MCF 10A (cell line): ENCODE measurements at regions of chr3 and their contacts with region 1.

Region 1: DNA sequence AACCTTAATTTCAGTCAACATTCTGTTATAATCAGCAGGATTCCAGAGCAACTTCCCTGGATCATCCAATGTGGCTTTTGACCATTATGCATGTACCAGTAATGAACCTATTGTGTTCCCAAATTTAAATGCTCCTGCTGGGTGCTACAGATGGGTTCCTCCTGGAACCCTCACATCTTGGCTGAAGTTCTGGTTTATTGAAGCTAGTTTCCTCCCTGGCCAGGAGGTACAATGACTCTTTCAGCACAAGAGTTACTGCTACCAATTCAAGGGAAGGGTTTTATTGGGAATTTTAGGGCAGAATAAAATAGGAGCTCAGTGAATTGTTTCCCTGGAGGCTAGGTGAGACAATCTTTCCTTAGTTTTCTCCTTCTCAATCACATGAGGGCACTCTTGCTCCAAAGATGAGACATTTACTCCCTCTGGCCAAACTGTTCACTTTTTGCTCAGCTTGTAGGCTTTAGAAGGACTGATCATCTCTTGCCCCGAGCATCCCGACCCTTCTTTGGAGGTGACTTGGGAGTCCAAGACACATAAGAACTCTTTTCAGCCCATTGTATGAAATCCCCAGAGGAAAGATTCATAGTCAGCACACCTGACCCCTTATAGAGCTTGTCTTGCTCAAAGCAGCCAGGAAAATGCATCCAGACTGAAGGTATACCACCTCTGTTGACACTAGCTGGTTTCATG is 8.8 kb upstream of the NPHP3 start:
- DNase-seq: peak; percentile 60
- H3K4me3 Mint-ChIP-seq: no peak overlapping the region
- H3K27ac Mint-ChIP-seq: no peak overlapping the region
- H3K4me1 Mint-ChIP-seq: no peaks in the 10 kb centered on the region
- H3K27me3 Mint-ChIP-seq: peaks cover 69% of the 10 kb centered on the region
- CTCF ChIP-seq: peak; percentile 55

Region 2: GRCh38 chr3:132709761-132710160 is 21.3 kb before region 1 on chr3:
- CTCF ChIA-PET with region 1: no interaction called
- POLR2A ChIA-PET with region 1: no interaction called
- intact Hi-C with region 1: no loop called
- DNase-seq: no peak
- H3K4me3 Mint-ChIP-seq: no peak overlapping the region
- H3K27ac Mint-ChIP-seq: no peak overlapping the region
- H3K4me1 Mint-ChIP-seq: no peaks in the 10 kb centered on the region
- H3K27me3 Mint-ChIP-seq: no peaks in the 10 kb centered on the region
- CTCF ChIP-seq: no peak

Region 3: DNA sequence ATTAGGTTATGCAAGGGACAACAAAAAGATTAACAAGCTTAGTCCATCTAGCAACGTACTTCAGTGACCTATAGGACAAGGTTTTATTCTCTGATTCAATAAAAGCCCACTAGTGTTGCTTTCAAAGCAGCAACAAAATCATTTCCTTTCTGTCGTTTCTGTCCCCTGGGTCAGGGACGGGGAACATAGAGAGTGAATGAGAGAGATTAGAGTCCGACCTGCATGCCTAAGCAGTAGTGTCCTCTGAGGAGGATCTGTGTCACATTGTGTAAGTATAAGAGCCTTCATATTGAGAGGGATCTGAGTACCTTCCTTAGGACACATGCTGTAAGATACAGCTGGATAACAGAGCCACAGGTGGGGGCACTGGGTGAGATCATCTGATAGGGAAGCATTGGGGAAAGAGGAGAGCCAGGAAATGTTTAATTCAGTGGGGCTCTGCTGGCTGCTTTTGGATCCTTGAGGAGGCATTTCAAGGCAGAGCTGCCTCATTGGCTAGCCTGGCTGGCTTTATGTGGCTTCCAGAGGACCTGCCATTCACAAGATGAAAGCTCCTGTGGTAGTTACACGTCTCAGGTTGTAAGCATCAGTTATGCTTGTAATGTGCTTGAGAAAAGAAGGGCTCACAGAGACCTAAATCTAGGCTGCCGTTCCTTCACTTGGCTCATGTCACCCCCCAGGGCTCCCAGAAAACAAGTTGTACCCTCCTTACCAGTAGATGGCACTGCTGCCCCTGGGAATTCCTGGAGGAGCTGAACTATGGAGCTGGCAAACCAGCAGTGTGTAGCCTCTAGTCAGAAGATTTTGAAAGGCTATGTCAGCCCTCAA is 309.9 kb after region 1 on chr3:
- CTCF ChIA-PET with region 1: interaction called, 35 read pairs
- POLR2A ChIA-PET with region 1: interaction called, 3 read pairs
- intact Hi-C with region 1: loop called (anchors 1 kb)
- DNase-seq: peak; percentile 84
- H3K4me3 Mint-ChIP-seq: no peak overlapping the region
- H3K27ac Mint-ChIP-seq: no peak overlapping the region
- H3K4me1 Mint-ChIP-seq: no peaks in the 10 kb centered on the region
- H3K27me3 Mint-ChIP-seq: peaks cover 91% of the 10 kb centered on the region
- CTCF ChIP-seq: peak; percentile 79

Region 4: DNA sequence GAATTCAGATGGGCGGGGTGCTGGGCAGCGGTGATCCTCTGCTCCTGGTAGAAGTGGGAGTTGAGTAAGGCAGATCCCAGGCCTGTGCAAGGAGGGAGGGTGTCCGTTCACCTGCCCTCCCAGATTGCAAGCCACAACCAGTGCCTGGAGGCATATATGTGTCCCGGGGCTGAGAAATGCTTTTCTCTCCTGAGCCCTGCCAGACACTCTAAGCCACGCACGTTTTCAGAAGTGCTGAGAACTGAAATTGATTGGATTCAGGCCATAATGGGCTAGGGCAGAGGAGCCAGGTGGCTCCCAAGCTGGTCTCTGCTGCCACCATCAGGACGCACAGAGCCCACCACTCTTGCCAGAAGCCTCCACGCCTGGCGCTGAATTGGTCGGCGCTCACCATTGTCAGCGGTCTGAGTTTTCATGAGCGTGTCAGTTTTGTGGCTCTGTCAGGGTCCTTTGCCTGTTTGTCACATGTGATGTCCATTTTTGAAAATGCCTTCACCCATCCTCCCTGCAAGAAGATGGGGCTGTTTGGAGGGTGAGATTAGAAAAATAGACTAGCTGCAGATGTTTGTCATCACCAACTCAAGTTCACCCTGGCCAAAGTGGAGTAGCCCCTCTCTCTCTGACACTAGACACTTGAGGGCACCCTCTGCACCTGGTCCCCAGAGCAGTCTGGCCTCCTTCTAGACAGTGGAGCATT is 653.4 kb after region 1 on chr3:
- CTCF ChIA-PET with region 1: interaction called, 69 read pairs
- POLR2A ChIA-PET with region 1: interaction called, 5 read pairs
- intact Hi-C with region 1: loop called (anchors 1 kb)
- DNase-seq: peak; percentile 77
- H3K4me3 Mint-ChIP-seq: no peak overlapping the region
- H3K27ac Mint-ChIP-seq: no peak overlapping the region
- H3K4me1 Mint-ChIP-seq: peaks cover 17% of the 10 kb centered on the region
- H3K27me3 Mint-ChIP-seq: peaks cover 21% of the 10 kb centered on the region
- CTCF ChIP-seq: peak; percentile 76

Region 5: GRCh38 chr3:133426721-133427120 is 695.7 kb after region 1 on chr3:
- CTCF ChIA-PET with region 1: interaction called, 32 read pairs
- POLR2A ChIA-PET with region 1: interaction called, 3 read pairs
- intact Hi-C with region 1: loop called (anchors 1 kb)
- DNase-seq: no peak
- H3K4me3 Mint-ChIP-seq: no peak overlapping the region
- H3K27ac Mint-ChIP-seq: no peak overlapping the region
- H3K4me1 Mint-ChIP-seq: no peaks in the 10 kb centered on the region
- H3K27me3 Mint-ChIP-seq: no peaks in the 10 kb centered on the region
- CTCF ChIP-seq: no peak

Region 6: GRCh38 chr3:133812872-133813271 is 1081.8 kb after region 1 on chr3:
- CTCF ChIA-PET with region 1: interaction called, 4 read pairs
- POLR2A ChIA-PET with region 1: no interaction called
- intact Hi-C with region 1: loop called (anchors 5 kb)
- DNase-seq: no peak
- H3K4me3 Mint-ChIP-seq: no peak overlapping the region
- H3K27ac Mint-ChIP-seq: no peak overlapping the region
- H3K4me1 Mint-ChIP-seq: peaks cover 18% of the 10 kb centered on the region
- H3K27me3 Mint-ChIP-seq: no peaks in the 10 kb centered on the region
- CTCF ChIP-seq: no peak